Mammary epithelial cell (primary cell): ENCODE measurements at regions of chr20 and their contacts with region 1.

Region 1: GRCh38 chr20:59247731-59248684 is 52.4 kb upstream of the EDN3 start:
- DNase-seq: no peak
- H3K4me3 ChIP-seq: no peak overlapping the region
- H3K27ac ChIP-seq: no peak overlapping the region
- H3K4me1 ChIP-seq: no peaks in the 10 kb centered on the region
- H3K27me3 ChIP-seq: no peaks in the 10 kb centered on the region
- CTCF ChIP-seq: no peak

Region 2: GRCh38 chr20:58900399-58900798 is 347.6 kb before region 1 on chr20:
- CTCF ChIA-PET with region 1: no interaction called
- dilution Hi-C with region 1: no loop called
- in situ Hi-C with region 1: no loop called
- intact Hi-C with region 1: no loop called
- DNase-seq: no peak
- H3K4me3 ChIP-seq: no peak overlapping the region
- H3K27ac ChIP-seq: no peak overlapping the region
- H3K4me1 ChIP-seq: peaks cover 6% of the 10 kb centered on the region
- H3K27me3 ChIP-seq: no peaks in the 10 kb centered on the region
- CTCF ChIP-seq: no peak

Region 3: DNA sequence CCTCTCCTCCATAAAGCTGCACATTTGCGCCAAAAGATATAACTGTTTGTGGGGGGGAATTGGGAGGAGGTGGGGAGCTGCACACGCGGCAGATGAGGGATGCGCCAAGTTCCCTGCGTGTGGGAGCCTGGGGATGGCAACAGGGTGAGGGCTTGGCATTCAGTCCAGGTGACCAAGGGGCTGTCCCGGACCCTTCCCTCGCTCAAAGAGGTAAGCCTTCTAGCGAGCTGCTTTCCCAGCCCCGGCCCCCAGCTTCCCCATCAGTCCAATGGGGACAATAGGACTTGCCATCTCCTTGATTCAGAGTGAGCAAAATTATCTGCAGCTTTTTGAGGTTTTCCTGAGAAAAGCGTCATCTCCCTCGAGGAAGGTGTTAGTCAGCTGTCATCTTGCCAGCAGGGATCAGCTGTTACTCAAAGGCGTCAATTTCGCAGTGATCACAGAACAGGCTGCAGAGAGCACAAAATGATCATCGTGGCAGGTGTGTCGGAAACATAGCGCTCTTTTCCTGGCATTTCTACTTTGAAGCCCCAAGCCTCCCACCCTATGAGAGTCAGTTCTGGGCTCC is 63.0 kb before region 1 on chr20:
- CTCF ChIA-PET with region 1: no interaction called
- dilution Hi-C with region 1: loop called (anchors 5 kb)
- in situ Hi-C with region 1: no loop called
- intact Hi-C with region 1: no loop called
- DNase-seq: no peak
- H3K4me3 ChIP-seq: no peak overlapping the region
- H3K27ac ChIP-seq: no peak overlapping the region
- H3K4me1 ChIP-seq: no peaks in the 10 kb centered on the region
- H3K27me3 ChIP-seq: peaks cover 2% of the 10 kb centered on the region
- CTCF ChIP-seq: no peak

Region 4: GRCh38 chr20:60057123-60057801 is 809.3 kb after region 1 on chr20:
- CTCF ChIA-PET with region 1: no interaction called
- dilution Hi-C with region 1: no loop called
- in situ Hi-C with region 1: no loop called
- intact Hi-C with region 1: no loop called
- DNase-seq: peak; percentile 65
- H3K4me3 ChIP-seq: peak overlapping the region in 1 of 3 experiments; percentile 58
- H3K27ac ChIP-seq: no peak overlapping the region
- H3K4me1 ChIP-seq: peaks cover 63% of the 10 kb centered on the region
- H3K27me3 ChIP-seq: no peaks in the 10 kb centered on the region
- CTCF ChIP-seq: peak; percentile 90